ENCODE measurements at regions of chr5 and their contacts with region 1.

Region 1: DNA sequence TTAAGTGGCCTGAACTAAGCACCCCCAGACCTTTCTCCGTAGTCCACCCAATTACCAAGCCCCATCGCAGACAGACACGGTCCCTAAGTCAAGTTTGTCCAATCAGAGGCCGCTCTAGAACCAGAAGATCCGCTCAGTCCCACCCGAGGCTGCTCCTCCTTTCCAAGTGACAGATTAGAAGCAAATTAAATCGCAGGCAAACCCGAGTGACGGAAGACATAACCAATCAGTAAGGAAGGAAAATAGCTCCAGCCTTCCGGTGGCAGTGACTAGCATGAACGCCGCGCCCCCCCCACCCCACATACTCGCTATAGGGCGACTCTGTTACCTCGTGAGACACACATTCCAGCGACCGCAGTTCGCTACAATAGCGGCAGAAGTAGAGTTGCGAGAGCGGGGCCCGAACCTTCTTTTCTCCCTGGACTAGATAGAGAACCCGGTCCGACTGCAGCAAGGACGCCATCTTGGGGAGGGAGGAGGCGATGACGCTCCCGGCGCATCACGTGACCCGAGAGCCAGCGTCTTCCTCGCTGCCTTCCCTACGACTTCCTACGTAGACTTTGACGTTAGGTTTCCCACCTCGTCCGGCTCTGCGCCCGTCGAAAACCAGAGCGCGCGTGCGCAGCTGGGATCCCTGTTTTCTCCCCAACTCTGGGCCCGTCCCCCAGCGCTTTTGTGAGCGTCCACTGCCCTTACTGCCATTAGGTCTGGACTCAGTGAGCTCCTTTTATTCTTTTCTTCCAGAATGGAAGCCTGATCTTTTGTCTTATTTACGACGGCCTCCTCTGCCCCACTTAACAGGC is at the start of gene DCTN4:
- DNase-seq: peak; percentile 94 to 97 (median 96)
- H3K4me3 ChIP-seq: peak within 1 kb of the TSS; percentile 78 to 88
- H3K4me3 Mint-ChIP-seq: peak within 1 kb of the TSS in 1 of 8 donors; percentile 7
- H3K27ac ChIP-seq: peak within 1 kb of the TSS; percentile 94
- H3K27ac Mint-ChIP-seq: no peak within 1 kb of the TSS
- H3K4me1 ChIP-seq: peaks cover 29% of the 10 kb centered on the region
- H3K4me1 Mint-ChIP-seq: peaks cover 24 to 36% (median 32%) of the 10 kb centered on the region in 4 donors
- H3K27me3 ChIP-seq: no peaks in the 10 kb centered on the region
- H3K27me3 Mint-ChIP-seq: no peaks in the 10 kb centered on the region
- total RNA-seq, gene DCTN4: 45.5 to 46.0 TPM

Region 2: GRCh38 chr5:150320048-150320555 is 438.6 kb before region 1 on chr5:
- CTCF ChIA-PET with region 1: no interaction called
- POLR2A ChIA-PET with region 1: no interaction called
- intact Hi-C with region 1: no loop called
- DNase-seq: no peak
- H3K4me3 ChIP-seq: no peak overlapping the region
- H3K4me3 Mint-ChIP-seq: no peak overlapping the region
- H3K27ac ChIP-seq: no peak overlapping the region
- H3K27ac Mint-ChIP-seq: no peak overlapping the region
- H3K4me1 ChIP-seq: no peaks in the 10 kb centered on the region
- H3K4me1 Mint-ChIP-seq: peaks cover 0 to 2% (median 0%) of the 10 kb centered on the region in 4 donors
- H3K27me3 ChIP-seq: no peaks in the 10 kb centered on the region
- H3K27me3 Mint-ChIP-seq: peaks cover 0 to 2% of the 10 kb centered on the region in 2 donors

Region 3: GRCh38 chr5:150449517-150450339 is 309.0 kb before region 1 on chr5 and contains the start of gene RPS14:
- CTCF ChIA-PET with region 1: interaction called, 4 read pairs
- POLR2A ChIA-PET with region 1: interaction called, 16 read pairs
- intact Hi-C with region 1: loop called (anchors 1 kb)
- DNase-seq: peak; percentile 96 to 98 (median 97)
- H3K4me3 ChIP-seq: peak within 1 kb of the TSS; percentile 87 to 99
- H3K4me3 Mint-ChIP-seq: peak within 1 kb of the TSS; percentile 92 to 100 (median 98)
- H3K27ac ChIP-seq: peak within 1 kb of the TSS; percentile 99
- H3K27ac Mint-ChIP-seq: peak within 1 kb of the TSS; percentile 99 to 100 (median 100)
- H3K4me1 ChIP-seq: peaks cover 28% of the 10 kb centered on the region
- H3K4me1 Mint-ChIP-seq: peaks cover 15 to 46% (median 36%) of the 10 kb centered on the region in 4 donors
- H3K27me3 ChIP-seq: no peaks in the 10 kb centered on the region
- H3K27me3 Mint-ChIP-seq: no peaks in the 10 kb centered on the region
- total RNA-seq, gene RPS14: 5,260 to 5,575 TPM

Region 4: DNA sequence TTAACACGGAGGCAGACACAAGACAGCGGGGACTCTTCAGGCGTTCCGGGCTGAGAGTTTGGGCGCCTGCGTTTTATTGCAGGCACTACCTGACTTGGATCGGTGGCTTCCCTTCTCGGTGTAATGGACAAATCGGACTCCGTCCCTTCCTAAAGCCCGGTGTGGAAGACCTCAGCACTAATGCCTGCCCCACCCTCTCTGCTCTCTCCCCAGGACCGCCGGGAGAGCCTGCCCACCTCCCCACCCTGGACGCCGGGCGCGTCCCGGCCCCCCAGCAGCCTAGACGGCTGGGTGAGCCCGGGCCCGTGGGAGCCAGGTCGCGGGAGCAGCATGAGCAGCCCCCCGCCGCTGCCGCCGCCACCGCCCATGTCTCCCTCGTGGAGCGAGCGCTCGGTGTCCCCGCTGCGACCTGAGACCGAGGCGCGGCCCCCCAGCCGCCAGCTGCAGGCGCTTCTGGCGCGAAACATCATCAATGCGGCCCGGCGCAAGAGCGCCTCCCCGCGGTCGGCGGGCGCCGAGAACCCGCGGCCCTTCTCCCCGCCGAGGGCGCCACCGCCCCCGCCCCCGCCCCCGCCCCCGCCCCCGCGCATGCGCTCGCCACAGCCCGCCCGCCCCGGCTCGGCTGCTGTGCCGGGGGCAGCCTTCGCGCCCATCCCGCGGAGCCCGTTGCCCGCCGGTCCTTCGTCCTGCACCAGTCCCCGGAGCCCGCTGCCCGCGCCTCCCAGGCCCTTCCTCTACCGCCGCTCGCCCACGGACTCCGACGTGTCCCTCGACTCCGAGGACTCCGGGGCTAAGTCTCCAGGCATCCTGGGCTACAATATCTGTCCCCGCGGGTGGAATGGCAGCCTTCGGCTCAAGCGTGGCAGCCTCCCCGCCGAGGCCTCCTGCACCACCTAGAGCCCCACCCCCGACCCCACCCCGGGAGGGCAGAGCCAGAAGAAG is 102.3 kb before region 1 on chr5:
- CTCF ChIA-PET with region 1: no interaction called
- POLR2A ChIA-PET with region 1: no interaction called
- intact Hi-C with region 1: loop called (anchors 1 kb)
- DNase-seq: peak; percentile 76 to 85 (median 84)
- H3K4me3 ChIP-seq: peak overlapping the region; percentile 17 to 56
- H3K4me3 Mint-ChIP-seq: peak overlapping the region; percentile 81 to 92 (median 83)
- H3K27ac ChIP-seq: peak overlapping the region; percentile 28
- H3K27ac Mint-ChIP-seq: peak overlapping the region in 6 of 7 donors; percentile 11 to 88 (median 70)
- H3K4me1 ChIP-seq: peaks cover 12% of the 10 kb centered on the region
- H3K4me1 Mint-ChIP-seq: peaks cover 3 to 12% (median 9%) of the 10 kb centered on the region in 4 donors
- H3K27me3 ChIP-seq: no peaks in the 10 kb centered on the region
- H3K27me3 Mint-ChIP-seq: no peaks in the 10 kb centered on the region

Region 5: GRCh38 chr5:150816946-150817345 is 58.2 kb after region 1 on chr5:
- CTCF ChIA-PET with region 1: no interaction called
- POLR2A ChIA-PET with region 1: no interaction called
- intact Hi-C with region 1: no loop called
- DNase-seq: no peak
- H3K4me3 ChIP-seq: no peak overlapping the region
- H3K4me3 Mint-ChIP-seq: no peak overlapping the region
- H3K27ac ChIP-seq: no peak overlapping the region
- H3K27ac Mint-ChIP-seq: no peak overlapping the region
- H3K4me1 ChIP-seq: no peaks in the 10 kb centered on the region
- H3K4me1 Mint-ChIP-seq: no peaks in the 10 kb centered on the region
- H3K27me3 ChIP-seq: no peaks in the 10 kb centered on the region
- H3K27me3 Mint-ChIP-seq: peaks cover 3 to 13% of the 10 kb centered on the region in 2 donors